ENCODE measurements at regions of chr15 and their contacts with region 1.

Region 1: GRCh38 chr15:99704444-99704838 is 28.8 kb downstream of the LYSMD4 start:
- DNase-seq: peak; percentile 65
- H3K4me3 ChIP-seq: no peak overlapping the region; a peak in 1 of 4 replicates
- H3K27ac ChIP-seq: peak overlapping the region in 1 of 2 experiments; percentile 80; a peak in 2 of 4 replicates
- H3K4me1 ChIP-seq: peaks cover 19 to 33% of the 10 kb centered on the region in 2 experiments
- H3K27me3 ChIP-seq: no peaks in the 10 kb centered on the region
- CTCF ChIP-seq: peak; percentile 77
- EP300 ChIP-seq: no peak
- RAD21 ChIP-seq: peak; percentile 91

Region 2: DNA sequence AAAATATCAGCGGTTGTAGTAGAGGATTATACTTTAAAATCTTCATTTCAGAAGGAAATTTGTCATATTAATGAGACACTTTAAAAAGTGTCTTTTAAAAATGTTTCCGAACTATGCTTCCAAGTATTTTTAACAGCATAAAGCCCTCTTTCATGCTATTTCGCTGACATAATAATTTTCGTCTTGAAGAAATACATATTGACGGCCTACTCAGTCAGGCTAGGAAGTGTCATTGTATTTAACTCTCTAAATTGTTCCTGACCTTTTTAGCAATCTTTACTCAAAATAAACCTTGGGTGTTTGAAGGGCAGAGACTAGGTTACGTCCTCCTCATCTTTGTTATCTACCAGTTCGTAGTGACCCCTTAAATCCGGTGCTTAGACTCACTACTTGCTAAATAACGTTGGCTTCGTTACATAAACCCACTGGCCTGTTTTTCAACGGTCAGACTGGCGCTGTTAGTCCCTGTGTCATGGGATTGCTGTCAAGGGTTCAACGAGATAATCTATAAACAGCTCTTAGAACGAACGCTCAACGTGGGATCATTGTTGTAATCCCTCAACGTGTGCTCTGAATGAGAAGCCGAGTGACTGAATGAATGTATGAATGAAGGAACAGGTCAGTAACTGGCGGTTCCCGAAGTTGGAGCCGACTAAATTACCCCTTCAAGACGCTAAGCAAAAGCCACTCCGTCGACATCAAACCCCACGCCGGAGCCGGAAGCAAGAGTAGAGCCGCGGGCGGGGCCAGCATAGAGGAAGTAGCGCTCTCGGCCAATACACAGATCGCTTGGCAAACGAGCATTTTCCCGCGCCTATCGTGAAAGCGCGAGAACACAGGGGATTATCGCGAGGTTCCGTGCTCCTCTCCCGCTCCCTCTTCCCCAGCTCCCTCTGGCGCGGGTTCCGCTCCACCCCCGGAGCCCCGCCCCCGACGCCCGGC is 453.7 kb before region 1 on chr15:
- CTCF ChIA-PET with region 1: interaction called, 10 read pairs
- POLR2A ChIA-PET with region 1: no interaction called
- DNase-seq: peak; percentile 98
- H3K4me3 ChIP-seq: peak overlapping the region; percentile 83 to 92
- H3K27ac ChIP-seq: peak overlapping the region; percentile 86 to 94
- H3K4me1 ChIP-seq: peaks cover 8 to 18% of the 10 kb centered on the region in 2 experiments; a peak in 3 of 4 replicates
- H3K27me3 ChIP-seq: no peaks in the 10 kb centered on the region
- CTCF ChIP-seq: no peak
- EP300 ChIP-seq: no peak; a peak in 1 of 4 replicates
- RAD21 ChIP-seq: no peak

Region 3: DNA sequence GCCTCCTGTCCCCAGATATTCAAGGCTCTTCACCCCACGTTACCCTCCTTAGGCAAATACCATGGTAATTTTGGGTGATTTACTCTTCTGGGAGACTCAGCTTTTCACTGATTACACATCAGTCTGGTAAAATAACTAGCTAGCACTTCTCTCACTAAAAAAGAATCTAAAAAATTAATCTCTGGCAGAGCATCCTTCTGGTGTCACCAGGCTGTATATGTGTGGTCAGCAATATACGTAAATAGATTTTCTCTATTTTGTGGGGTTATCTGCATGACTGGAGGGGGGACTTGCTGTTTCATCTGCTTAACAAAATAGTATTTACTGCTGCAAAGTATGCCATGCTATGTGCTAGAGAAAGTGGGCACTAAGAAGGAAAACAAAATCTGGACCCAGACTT is 408.1 kb before region 1 on chr15:
- CTCF ChIA-PET with region 1: interaction called, 13 read pairs
- POLR2A ChIA-PET with region 1: no interaction called
- DNase-seq: no peak
- H3K4me3 ChIP-seq: no peak overlapping the region
- H3K27ac ChIP-seq: no peak overlapping the region
- H3K4me1 ChIP-seq: no peaks in the 10 kb centered on the region
- H3K27me3 ChIP-seq: no peaks in the 10 kb centered on the region
- CTCF ChIP-seq: no peak
- EP300 ChIP-seq: no peak
- RAD21 ChIP-seq: no peak

Region 4: DNA sequence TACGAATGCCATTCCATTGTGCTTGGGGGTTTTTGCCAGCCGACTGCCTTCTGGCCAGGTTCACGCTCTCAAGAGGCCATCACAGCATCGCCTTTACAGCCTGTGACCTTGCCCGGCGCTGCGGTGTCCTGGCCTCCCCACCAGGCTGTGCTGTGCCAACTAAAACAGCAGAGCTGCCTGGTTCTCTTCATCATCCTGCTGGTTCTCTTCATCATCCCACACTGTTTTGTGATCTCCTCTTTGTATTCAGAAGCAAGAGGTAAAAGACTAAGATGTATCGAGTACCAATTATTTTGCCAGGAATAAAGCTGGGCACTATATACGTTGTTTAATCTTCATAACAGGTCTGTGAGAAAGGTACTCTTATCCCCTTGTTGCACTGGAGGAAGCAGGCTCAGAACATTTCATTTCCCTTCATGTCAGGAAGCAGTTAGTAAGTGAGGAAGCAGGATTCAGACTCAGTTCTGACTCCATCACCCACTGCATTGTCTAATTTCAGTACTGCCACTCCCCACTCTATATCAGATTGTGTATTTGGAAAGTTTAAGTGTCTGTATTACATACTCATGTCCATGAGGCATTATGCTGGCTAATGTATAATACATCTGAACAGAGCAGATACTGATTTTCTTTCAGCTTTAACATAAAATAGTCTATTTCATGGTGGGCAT is 360.4 kb before region 1 on chr15:
- CTCF ChIA-PET with region 1: interaction called, 18 read pairs
- POLR2A ChIA-PET with region 1: no interaction called
- DNase-seq: peak; percentile 30
- H3K4me3 ChIP-seq: no peak overlapping the region
- H3K27ac ChIP-seq: no peak overlapping the region
- H3K4me1 ChIP-seq: peaks cover 0 to 9% of the 10 kb centered on the region in 2 experiments; a peak in 1 of 4 replicates
- H3K27me3 ChIP-seq: no peaks in the 10 kb centered on the region
- CTCF ChIP-seq: peak; percentile 45
- EP300 ChIP-seq: no peak
- RAD21 ChIP-seq: peak; percentile 48

Region 5: GRCh38 chr15:99511866-99512661 is 192.4 kb before region 1 on chr15:
- CTCF ChIA-PET with region 1: interaction called, 10 read pairs
- POLR2A ChIA-PET with region 1: no interaction called
- DNase-seq: no peak
- H3K4me3 ChIP-seq: no peak overlapping the region
- H3K27ac ChIP-seq: no peak overlapping the region
- H3K4me1 ChIP-seq: peaks cover 0 to 11% of the 10 kb centered on the region in 2 experiments; a peak in 2 of 4 replicates
- H3K27me3 ChIP-seq: no peaks in the 10 kb centered on the region
- CTCF ChIP-seq: no peak
- EP300 ChIP-seq: no peak
- RAD21 ChIP-seq: no peak

Region 6: GRCh38 chr15:99692825-99693224 is 11.6 kb before region 1 on chr15:
- CTCF ChIA-PET with region 1: interaction called, 29 read pairs
- POLR2A ChIA-PET with region 1: no interaction called
- DNase-seq: no peak
- H3K4me3 ChIP-seq: no peak overlapping the region
- H3K27ac ChIP-seq: no peak overlapping the region
- H3K4me1 ChIP-seq: peaks cover 0 to 5% of the 10 kb centered on the region in 2 experiments; a peak in 1 of 4 replicates
- H3K27me3 ChIP-seq: no peaks in the 10 kb centered on the region
- CTCF ChIP-seq: no peak
- EP300 ChIP-seq: no peak
- RAD21 ChIP-seq: no peak

Region 7: GRCh38 chr15:99755692-99756409 is 51.4 kb after region 1 on chr15:
- CTCF ChIA-PET with region 1: interaction called, 26 read pairs
- POLR2A ChIA-PET with region 1: no interaction called
- DNase-seq: peak; percentile 68
- H3K4me3 ChIP-seq: no peak overlapping the region; a peak in 1 of 4 replicates
- H3K27ac ChIP-seq: no peak overlapping the region
- H3K4me1 ChIP-seq: no peaks in the 10 kb centered on the region; a peak in 1 of 4 replicates
- H3K27me3 ChIP-seq: no peaks in the 10 kb centered on the region
- CTCF ChIP-seq: peak; percentile 83
- EP300 ChIP-seq: no peak
- RAD21 ChIP-seq: peak; percentile 84